ENCODE measurements at regions of chr14 and their contacts with region 1.

Region 1: DNA sequence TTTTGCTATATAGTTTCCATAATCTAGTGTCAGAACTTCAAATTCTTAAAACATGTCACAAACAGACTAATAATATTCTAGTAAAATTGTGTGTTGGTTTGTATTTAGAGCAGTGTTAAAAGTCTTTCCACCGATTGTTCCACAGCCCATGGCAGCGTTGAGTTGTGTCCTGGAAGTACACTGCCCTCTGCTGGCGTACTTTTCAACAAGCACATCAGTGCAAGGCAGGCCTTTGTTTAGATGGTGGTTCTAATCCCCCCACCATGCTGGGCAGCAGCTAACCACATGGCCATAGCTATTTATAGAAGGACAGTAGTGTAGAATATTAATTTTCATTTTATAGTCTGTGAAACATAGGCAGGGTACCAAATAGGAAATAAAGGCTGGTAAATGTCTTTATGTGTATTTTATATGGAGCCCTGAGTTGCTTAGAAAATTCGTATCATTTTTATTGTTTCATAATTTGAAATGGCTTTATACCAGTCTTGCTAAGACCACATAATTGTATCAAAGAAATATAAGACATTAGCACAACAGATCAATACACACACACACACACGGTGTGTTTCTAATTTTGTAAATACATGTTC is 235.4 kb downstream of the SEC23A start:
- DNase-seq: peak in 33 of 35 experiments; percentile 2 to 71 (median 32)
- ATAC-seq: peak in 1 of 4 experiments; percentile 56
- H3K4me3 ChIP-seq: no peak overlapping the region
- H3K4me3 Mint-ChIP-seq: no peak overlapping the region
- H3K27ac ChIP-seq: no peak overlapping the region
- H3K27ac Mint-ChIP-seq: no peak overlapping the region
- H3K4me1 ChIP-seq: no peaks in the 10 kb centered on the region
- H3K4me1 Mint-ChIP-seq: no peaks in the 10 kb centered on the region
- H3K27me3 ChIP-seq: peaks cover 0 to 12% of the 10 kb centered on the region in 2 experiments
- H3K27me3 Mint-ChIP-seq: peaks cover 4 to 8% of the 10 kb centered on the region in 2 donors

Region 2: GRCh38 chr14:37903343-37904191 is 964.1 kb before region 1 on chr14:
- CTCF ChIA-PET with region 1: interaction called, 12 to 26 read pairs
- POLR2A ChIA-PET with region 1: no interaction called
- DNase-seq: peak in 7 of 35 experiments; percentile 1 to 61 (median 2)
- ATAC-seq: peak in 1 of 4 experiments; percentile 40
- H3K4me3 ChIP-seq: no peak overlapping the region
- H3K4me3 Mint-ChIP-seq: no peak overlapping the region
- H3K27ac ChIP-seq: no peak overlapping the region
- H3K27ac Mint-ChIP-seq: no peak overlapping the region
- H3K4me1 ChIP-seq: no peaks in the 10 kb centered on the region
- H3K4me1 Mint-ChIP-seq: peaks cover 0 to 2% (median 0%) of the 10 kb centered on the region in 3 donors
- H3K27me3 ChIP-seq: peaks cover 0 to 10% of the 10 kb centered on the region in 2 experiments
- H3K27me3 Mint-ChIP-seq: peaks cover 3 to 20% of the 10 kb centered on the region in 2 donors

Region 3: DNA sequence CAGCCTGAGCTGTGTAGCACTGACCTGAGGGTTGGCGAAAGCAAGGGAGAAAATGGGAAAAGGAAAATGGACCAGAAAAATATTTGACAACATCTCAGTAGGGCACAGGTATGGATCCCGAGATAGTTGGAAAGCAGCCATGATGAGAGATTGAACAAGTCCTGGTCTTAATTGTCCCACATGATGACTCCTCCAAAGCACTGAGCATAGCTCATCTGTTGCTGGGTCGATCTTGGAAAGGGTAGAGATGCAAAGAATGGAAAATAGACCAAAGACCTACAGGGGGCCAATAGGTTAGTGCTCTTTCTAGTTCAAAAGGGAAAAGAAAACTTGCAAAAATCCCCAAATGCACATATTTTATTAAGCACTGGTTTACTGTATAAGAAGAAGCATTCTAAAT is 16.5 kb before region 1 on chr14:
- CTCF ChIA-PET with region 1: no interaction called
- POLR2A ChIA-PET with region 1: no interaction called
- DNase-seq: no peak
- ATAC-seq: no peak
- H3K4me3 ChIP-seq: no peak overlapping the region
- H3K4me3 Mint-ChIP-seq: no peak overlapping the region
- H3K27ac ChIP-seq: no peak overlapping the region
- H3K27ac Mint-ChIP-seq: no peak overlapping the region
- H3K4me1 ChIP-seq: no peaks in the 10 kb centered on the region
- H3K4me1 Mint-ChIP-seq: no peaks in the 10 kb centered on the region
- H3K27me3 ChIP-seq: no peaks in the 10 kb centered on the region
- H3K27me3 Mint-ChIP-seq: no peaks in the 10 kb centered on the region